BJ (cell line): ENCODE measurements at regions of chr5 and their contacts with region 1.

Region 1: GRCh38 chr5:10661401-10661800 is 97.5 kb downstream of the ANKRD33B start:
- DNase-seq: no peak
- H3K4me3 ChIP-seq: no peak overlapping the region
- H3K27me3 ChIP-seq: peaks cover 2% of the 10 kb centered on the region; the same call in 1 of the 2 replicates
- CTCF ChIP-seq: no peak

Region 2: GRCh38 chr5:10602031-10602806 is 59.2 kb before region 1 on chr5:
- CTCF ChIA-PET with region 1: no interaction called
- POLR2A ChIA-PET with region 1: interaction called, 12 read pairs
- DNase-seq: no peak
- H3K4me3 ChIP-seq: no peak overlapping the region
- H3K27me3 ChIP-seq: no peaks in the 10 kb centered on the region
- CTCF ChIP-seq: no peak